K562 (cell line): ENCODE measurements at regions of chr10 and their contacts with region 1.

Region 1: DNA sequence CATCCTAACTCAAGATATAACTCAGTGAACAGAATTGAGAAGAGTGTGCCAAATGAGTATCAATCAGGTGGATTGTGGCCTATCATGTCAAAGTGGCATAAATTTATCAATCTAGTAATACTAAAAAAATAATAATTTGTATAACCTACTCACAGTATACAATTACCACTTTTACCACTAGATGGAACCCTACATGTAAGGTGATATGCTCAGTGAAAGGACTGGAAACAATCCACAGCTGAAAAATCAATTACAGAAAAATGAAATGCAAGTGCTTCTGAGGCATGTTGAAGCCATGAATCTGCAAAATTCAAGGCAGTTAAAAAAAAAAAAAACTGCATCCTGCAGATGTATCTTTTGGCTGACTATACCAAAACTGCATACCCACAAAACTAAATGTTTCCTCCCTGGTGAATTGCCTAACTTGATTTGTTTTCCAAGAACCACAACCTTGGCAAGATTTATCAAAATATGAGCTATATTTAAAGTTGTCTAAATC is 13.9 kb downstream of the ARHGAP19 start:
- DNase-seq: peak; percentile 18 to 63 (median 37)
- ATAC-seq: peak; percentile 95
- H3K4me3 ChIP-seq: no peak overlapping the region
- H3K27ac ChIP-seq: peak overlapping the region; percentile 63; the same call in 2 of the 3 replicates
- H3K4me1 ChIP-seq: peaks cover 4 to 8% of the 10 kb centered on the region in 2 experiments; a peak in 4 of 5 replicates
- H3K27me3 ChIP-seq: no peaks in the 10 kb centered on the region
- CTCF ChIP-seq: peak; percentile 22 to 72 (median 39); a peak in 3 of 6 replicates
- EP300 ChIP-seq: no peak
- POLR2A ChIP-seq: no peak
- RAD21 ChIP-seq: peak; percentile 61 to 71

Region 2: DNA sequence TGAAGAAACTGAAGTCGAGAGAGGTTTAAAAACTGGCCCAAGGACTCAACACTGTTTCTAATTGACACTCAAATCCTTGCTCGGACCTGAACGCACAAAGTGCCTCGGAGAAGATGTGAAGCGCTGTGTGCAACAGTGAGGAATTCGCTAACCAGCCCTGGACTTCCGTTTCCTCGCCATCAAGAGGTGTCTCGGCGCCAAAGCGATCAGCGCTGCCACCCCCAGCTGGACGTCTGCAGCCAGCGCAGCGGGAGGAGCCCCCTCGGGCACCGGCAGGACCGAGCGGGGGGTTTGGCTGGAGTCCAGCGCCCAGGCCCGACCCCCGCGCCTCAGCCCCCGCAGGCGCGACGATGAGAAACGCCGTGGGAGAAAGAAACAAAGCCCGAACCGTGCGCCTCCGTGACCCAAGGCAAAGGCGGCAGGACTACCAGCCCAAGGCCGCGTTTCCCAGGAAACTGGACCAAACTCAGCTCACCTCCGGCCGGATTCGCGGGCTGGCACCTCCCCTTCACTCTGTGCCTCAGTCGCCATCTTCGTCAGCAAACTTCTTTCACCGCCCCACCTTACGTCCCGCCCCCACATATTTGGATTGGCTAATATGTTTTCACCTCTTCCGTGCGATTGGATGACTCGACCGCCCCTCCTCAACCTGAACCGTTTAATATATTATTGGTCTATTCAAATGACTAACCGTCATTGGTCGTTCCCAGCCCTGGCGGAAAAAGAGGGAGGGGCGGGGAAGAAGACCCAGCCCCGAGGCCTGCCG is 13.7 kb after region 1 on chr10 and contains the start of gene ARHGAP19:
- CTCF ChIA-PET with region 1: no interaction called
- POLR2A ChIA-PET with region 1: interaction called, 19 read pairs
- in situ Hi-C with region 1: no loop called
- intact Hi-C with region 1: no loop called
- DNase-seq: peak; percentile 93 to 96 (median 94)
- ATAC-seq: peak; percentile 95
- H3K4me3 ChIP-seq: peak within 1 kb of the TSS; percentile 78
- H3K27ac ChIP-seq: peak within 1 kb of the TSS; percentile 89
- H3K4me1 ChIP-seq: peaks cover 8 to 18% of the 10 kb centered on the region in 2 experiments; a peak in 4 of 5 replicates
- H3K27me3 ChIP-seq: no peaks in the 10 kb centered on the region
- CTCF ChIP-seq: peak in 1 of 3 experiments; percentile 19; a peak in 1 of 6 replicates
- EP300 ChIP-seq: 0 out of 2 replicates have a peak, but pooled peaks have one; percentile 16
- POLR2A ChIP-seq: peak; percentile 83
- RAD21 ChIP-seq: no peak
- polyA plus RNA-seq, gene ARHGAP19: 14.8 to 27.4 TPM

Region 3: DNA sequence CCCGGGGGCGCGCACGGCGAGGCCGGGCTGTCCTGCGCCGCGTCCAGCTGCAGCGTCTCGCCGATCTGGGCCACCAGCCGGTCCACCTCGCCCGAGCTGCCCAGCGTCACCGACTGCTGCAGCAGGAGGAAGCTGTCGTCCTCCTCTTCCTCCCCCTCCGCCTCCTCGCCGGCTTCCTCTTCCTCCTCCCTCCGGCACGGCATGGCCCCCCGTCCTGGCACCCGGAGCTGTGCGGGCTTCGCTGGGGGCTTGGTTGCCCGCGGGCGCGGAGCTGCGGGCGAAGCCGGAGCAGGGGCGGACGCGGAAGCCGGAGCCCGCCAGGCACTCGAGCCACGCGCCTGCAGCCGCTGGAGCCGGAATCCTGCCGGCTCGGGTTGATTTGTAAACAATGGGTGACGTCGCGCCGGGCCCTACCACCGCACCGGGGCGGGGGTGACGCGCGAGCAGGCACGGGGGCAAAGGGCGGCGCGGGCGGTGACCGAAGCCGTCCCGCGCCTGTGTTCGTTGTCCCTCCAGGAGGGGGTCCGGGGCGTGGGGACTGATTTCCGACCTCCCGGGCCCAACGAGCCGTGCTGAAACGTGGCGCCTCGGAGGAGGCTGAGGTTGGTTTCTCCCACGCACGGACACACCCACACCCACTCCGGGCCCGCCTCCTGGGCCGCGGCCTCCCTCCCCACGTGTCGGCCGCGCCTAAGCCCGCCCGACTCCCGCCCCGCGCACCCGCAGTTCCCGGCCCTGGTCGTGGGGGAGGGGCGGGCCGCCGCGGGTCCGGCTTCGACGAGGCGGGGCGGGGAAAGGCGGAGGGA is 56.0 kb after region 1 on chr10 and contains the start of gene FRAT2:
- CTCF ChIA-PET with region 1: interaction called, 3 read pairs
- POLR2A ChIA-PET with region 1: interaction called, 6 read pairs
- in situ Hi-C with region 1: no loop called
- intact Hi-C with region 1: loop called (anchors 2 kb)
- DNase-seq: peak; percentile 90 to 94 (median 92)
- ATAC-seq: peak; percentile 87
- H3K4me3 ChIP-seq: peak within 1 kb of the TSS; percentile 73
- H3K27ac ChIP-seq: peak within 1 kb of the TSS; percentile 98
- H3K4me1 ChIP-seq: peaks cover 14 to 32% of the 10 kb centered on the region in 2 experiments
- H3K27me3 ChIP-seq: no peaks in the 10 kb centered on the region
- CTCF ChIP-seq: no peak
- EP300 ChIP-seq: no peak
- POLR2A ChIP-seq: peak; percentile 71
- RAD21 ChIP-seq: no peak
- polyA plus RNA-seq, gene FRAT2: 4.3 to 5.3 TPM

Region 4: GRCh38 chr10:97355571-97355975 is 77.0 kb after region 1 on chr10:
- CTCF ChIA-PET with region 1: interaction called, 4 read pairs
- POLR2A ChIA-PET with region 1: interaction called, 5 read pairs
- in situ Hi-C with region 1: no loop called
- intact Hi-C with region 1: loop called (anchors 2 kb)
- DNase-seq: no peak
- ATAC-seq: peak; percentile 68
- H3K4me3 ChIP-seq: no peak overlapping the region
- H3K27ac ChIP-seq: no peak overlapping the region; the same call in 2 of the 3 replicates
- H3K4me1 ChIP-seq: no peaks in the 10 kb centered on the region; a peak in 1 of 5 replicates
- H3K27me3 ChIP-seq: no peaks in the 10 kb centered on the region
- CTCF ChIP-seq: peak; percentile 44 to 55 (median 54)
- EP300 ChIP-seq: no peak
- POLR2A ChIP-seq: no peak
- RAD21 ChIP-seq: peak in 1 of 2 experiments; percentile 58; a peak in 3 of 4 replicates